ENCODE measurements at regions of chr14 and their contacts with region 1.

Region 1: GRCh38 chr14:89954070-89955028 is at the start of gene EFCAB11:
- DNase-seq: peak; percentile 97
- ATAC-seq: peak; percentile 81
- H3K4me3 ChIP-seq: peak within 1 kb of the TSS; percentile 72 to 95 (median 84)
- H3K4me3 Mint-ChIP-seq: peak within 1 kb of the TSS; percentile 99
- H3K27ac ChIP-seq: peak within 1 kb of the TSS; percentile 99
- H3K27ac Mint-ChIP-seq: peak within 1 kb of the TSS; percentile 100
- H3K4me1 ChIP-seq: peaks cover 16 to 22% of the 10 kb centered on the region in 2 donors
- H3K4me1 Mint-ChIP-seq: peaks cover 32% of the 10 kb centered on the region
- H3K27me3 ChIP-seq: no peaks in the 10 kb centered on the region
- H3K27me3 Mint-ChIP-seq: no peaks in the 10 kb centered on the region
- CTCF ChIP-seq: peak; percentile 16
- total RNA-seq, gene EFCAB11: 13.8 and 14.2 TPM in 2 replicates

Region 2: DNA sequence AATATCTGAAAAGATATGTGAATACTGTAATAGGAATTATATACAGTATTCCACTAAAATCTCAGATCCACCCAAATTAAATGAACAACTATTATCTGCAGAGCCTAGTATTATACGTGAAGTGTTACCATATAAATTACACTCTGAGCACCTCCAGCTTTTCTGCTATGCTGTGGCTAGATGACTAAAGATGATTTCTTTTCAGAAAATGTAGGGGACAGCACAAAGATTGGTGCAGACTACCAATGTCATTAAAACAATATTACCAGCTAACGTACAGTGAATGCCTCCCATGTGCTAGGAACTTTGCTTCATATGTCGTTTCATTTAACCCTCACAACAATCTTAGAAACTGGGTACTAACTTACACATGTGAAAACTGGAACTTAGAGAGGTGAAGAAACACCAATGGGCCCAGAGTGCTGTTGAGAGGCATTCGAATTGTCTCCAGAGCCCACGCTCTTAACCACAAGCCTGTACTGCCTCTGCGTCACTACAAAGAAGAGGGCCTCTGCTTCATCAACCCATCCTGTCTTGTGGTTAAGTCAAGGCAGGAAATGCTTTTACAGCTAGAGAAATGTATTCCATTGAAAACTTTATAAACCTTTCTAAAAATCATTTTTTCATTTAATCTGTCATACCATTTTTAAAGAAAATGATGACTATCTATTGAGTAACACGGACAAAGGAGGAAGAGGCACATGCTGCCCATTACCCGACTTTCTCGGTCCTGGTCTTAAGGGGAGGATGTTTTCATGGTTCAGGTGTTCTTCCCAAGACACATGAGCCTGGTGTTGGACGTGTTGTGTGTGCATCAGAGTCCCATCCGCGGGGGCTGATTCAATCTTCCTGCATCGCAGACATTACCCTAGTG is 1948.1 kb before region 1 on chr14:
- CTCF ChIA-PET with region 1: no interaction called
- POLR2A ChIA-PET with region 1: no interaction called
- intact Hi-C with region 1: loop called (anchors 5 kb)
- DNase-seq: peak; percentile 83
- ATAC-seq: peak; percentile 90
- H3K4me3 ChIP-seq: peak overlapping the region; percentile 49 to 94 (median 62)
- H3K4me3 Mint-ChIP-seq: peak overlapping the region; percentile 83
- H3K27ac ChIP-seq: peak overlapping the region; percentile 78 to 90
- H3K27ac Mint-ChIP-seq: peak overlapping the region; percentile 95
- H3K4me1 ChIP-seq: peaks cover 40 to 50% of the 10 kb centered on the region in 2 donors
- H3K4me1 Mint-ChIP-seq: peaks cover 75% of the 10 kb centered on the region
- H3K27me3 ChIP-seq: no peaks in the 10 kb centered on the region
- H3K27me3 Mint-ChIP-seq: no peaks in the 10 kb centered on the region
- CTCF ChIP-seq: no peak

Region 3: GRCh38 chr14:88792572-88793258 is 1161.6 kb before region 1 on chr14 and contains the start of gene EML5:
- CTCF ChIA-PET with region 1: no interaction called
- POLR2A ChIA-PET with region 1: no interaction called
- intact Hi-C with region 1: loop called (anchors 10 kb)
- DNase-seq: peak; percentile 93
- ATAC-seq: peak; percentile 84
- H3K4me3 ChIP-seq: peak within 1 kb of the TSS; percentile 68 to 77 (median 74)
- H3K4me3 Mint-ChIP-seq: peak within 1 kb of the TSS; percentile 92
- H3K27ac ChIP-seq: peak within 1 kb of the TSS; percentile 68 to 83
- H3K27ac Mint-ChIP-seq: peak within 1 kb of the TSS; percentile 89
- H3K4me1 ChIP-seq: peaks cover 8 to 14% of the 10 kb centered on the region in 2 donors
- H3K4me1 Mint-ChIP-seq: peaks cover 19% of the 10 kb centered on the region
- H3K27me3 ChIP-seq: peaks cover 0 to 4% (median 2%) of the 10 kb centered on the region in 4 experiments
- H3K27me3 Mint-ChIP-seq: no peaks in the 10 kb centered on the region
- CTCF ChIP-seq: peak; percentile 17
- total RNA-seq, gene EML5: 6.5 and 6.9 TPM in 2 replicates

Region 4: GRCh38 chr14:89936658-89937185 is 17.6 kb before region 1 on chr14:
- CTCF ChIA-PET with region 1: interaction called, 13 read pairs
- POLR2A ChIA-PET with region 1: no interaction called
- intact Hi-C with region 1: no loop called
- DNase-seq: no peak
- ATAC-seq: no peak
- H3K4me3 ChIP-seq: no peak overlapping the region
- H3K4me3 Mint-ChIP-seq: no peak overlapping the region
- H3K27ac ChIP-seq: no peak overlapping the region
- H3K27ac Mint-ChIP-seq: no peak overlapping the region
- H3K4me1 ChIP-seq: no peaks in the 10 kb centered on the region
- H3K4me1 Mint-ChIP-seq: no peaks in the 10 kb centered on the region
- H3K27me3 ChIP-seq: no peaks in the 10 kb centered on the region
- H3K27me3 Mint-ChIP-seq: no peaks in the 10 kb centered on the region
- CTCF ChIP-seq: no peak

Region 5: GRCh38 chr14:89983375-89983774 is 29.0 kb after region 1 on chr14:
- CTCF ChIA-PET with region 1: no interaction called
- POLR2A ChIA-PET with region 1: no interaction called
- intact Hi-C with region 1: no loop called
- DNase-seq: no peak
- ATAC-seq: no peak
- H3K4me3 ChIP-seq: no peak overlapping the region
- H3K4me3 Mint-ChIP-seq: no peak overlapping the region
- H3K27ac ChIP-seq: no peak overlapping the region
- H3K27ac Mint-ChIP-seq: no peak overlapping the region
- H3K4me1 ChIP-seq: no peaks in the 10 kb centered on the region
- H3K4me1 Mint-ChIP-seq: no peaks in the 10 kb centered on the region
- H3K27me3 ChIP-seq: no peaks in the 10 kb centered on the region
- H3K27me3 Mint-ChIP-seq: no peaks in the 10 kb centered on the region
- CTCF ChIP-seq: no peak

Region 6: GRCh38 chr14:90383075-90383730 is 428.9 kb after region 1 on chr14:
- CTCF ChIA-PET with region 1: no interaction called
- POLR2A ChIA-PET with region 1: interaction called, 10 read pairs
- intact Hi-C with region 1: loop called (anchors 2 kb)
- DNase-seq: peak; percentile 99
- ATAC-seq: peak; percentile 91
- H3K4me3 ChIP-seq: peak overlapping the region; percentile 60 to 97 (median 92)
- H3K4me3 Mint-ChIP-seq: no peak overlapping the region
- H3K27ac ChIP-seq: peak overlapping the region; percentile 93 to 98
- H3K27ac Mint-ChIP-seq: no peak overlapping the region
- H3K4me1 ChIP-seq: peaks cover 15 to 24% of the 10 kb centered on the region in 2 donors
- H3K4me1 Mint-ChIP-seq: peaks cover 12% of the 10 kb centered on the region
- H3K27me3 ChIP-seq: no peaks in the 10 kb centered on the region
- H3K27me3 Mint-ChIP-seq: no peaks in the 10 kb centered on the region
- CTCF ChIP-seq: no peak

Region 7: GRCh38 chr14:90827916-90828610 is 873.7 kb after region 1 on chr14:
- CTCF ChIA-PET with region 1: no interaction called
- POLR2A ChIA-PET with region 1: no interaction called
- intact Hi-C with region 1: loop called (anchors 2 kb)
- DNase-seq: peak; percentile 92
- ATAC-seq: peak; percentile 100
- H3K4me3 ChIP-seq: peak overlapping the region; percentile 44 to 58 (median 51)
- H3K4me3 Mint-ChIP-seq: peak overlapping the region; percentile 77
- H3K27ac ChIP-seq: peak overlapping the region; percentile 61 to 75
- H3K27ac Mint-ChIP-seq: peak overlapping the region; percentile 80
- H3K4me1 ChIP-seq: peaks cover 13 to 16% of the 10 kb centered on the region in 2 donors
- H3K4me1 Mint-ChIP-seq: peaks cover 16% of the 10 kb centered on the region
- H3K27me3 ChIP-seq: no peaks in the 10 kb centered on the region
- H3K27me3 Mint-ChIP-seq: no peaks in the 10 kb centered on the region
- CTCF ChIP-seq: no peak

Measured in B cell (primary cell).